Mammary epithelial cell (primary cell): ENCODE measurements at regions of chr9 and their contacts with region 1.

Region 1: DNA sequence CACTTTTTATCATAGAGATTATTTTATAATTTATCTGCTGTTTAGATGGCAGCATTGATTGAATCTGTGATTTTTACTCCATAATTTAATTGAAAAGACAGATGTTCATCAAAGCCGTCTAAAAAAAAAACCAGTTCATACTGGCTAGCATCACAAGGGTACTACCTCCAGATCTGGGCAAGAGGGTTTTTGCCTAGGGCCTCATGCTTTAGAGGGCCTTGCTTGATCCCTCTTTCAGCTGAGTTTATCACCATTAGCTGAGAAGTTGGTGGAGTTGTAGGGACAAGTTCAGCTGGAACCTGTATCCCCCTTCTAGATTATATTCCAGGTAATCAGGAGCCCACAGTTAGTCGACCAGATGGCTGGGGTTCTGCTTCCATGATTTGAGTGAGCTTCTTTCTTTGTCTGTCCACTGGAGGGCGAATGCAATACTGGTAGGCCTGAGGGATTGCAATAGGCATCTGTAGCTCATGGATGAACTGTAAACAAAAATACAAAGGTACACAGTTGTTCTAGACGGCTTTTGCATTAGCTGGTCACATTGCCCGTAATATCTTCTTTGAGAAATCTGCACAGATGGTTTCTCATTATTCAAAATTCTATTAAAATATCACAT is 88.8 kb downstream of the PCSK5 start:
- DNase-seq: no peak
- H3K4me3 ChIP-seq: no peak overlapping the region
- H3K27ac ChIP-seq: no peak overlapping the region
- H3K4me1 ChIP-seq: no peaks in the 10 kb centered on the region
- H3K27me3 ChIP-seq: no peaks in the 10 kb centered on the region
- CTCF ChIP-seq: peak; percentile 32 to 47

Region 2: GRCh38 chr9:75788006-75788634 is 191.1 kb before region 1 on chr9:
- CTCF ChIA-PET with region 1: interaction called, 20 read pairs
- dilution Hi-C with region 1: no loop called
- in situ Hi-C with region 1: no loop called
- intact Hi-C with region 1: no loop called
- DNase-seq: no peak
- H3K4me3 ChIP-seq: no peak overlapping the region
- H3K27ac ChIP-seq: no peak overlapping the region
- H3K4me1 ChIP-seq: no peaks in the 10 kb centered on the region
- H3K27me3 ChIP-seq: no peaks in the 10 kb centered on the region
- CTCF ChIP-seq: no peak

Region 3: DNA sequence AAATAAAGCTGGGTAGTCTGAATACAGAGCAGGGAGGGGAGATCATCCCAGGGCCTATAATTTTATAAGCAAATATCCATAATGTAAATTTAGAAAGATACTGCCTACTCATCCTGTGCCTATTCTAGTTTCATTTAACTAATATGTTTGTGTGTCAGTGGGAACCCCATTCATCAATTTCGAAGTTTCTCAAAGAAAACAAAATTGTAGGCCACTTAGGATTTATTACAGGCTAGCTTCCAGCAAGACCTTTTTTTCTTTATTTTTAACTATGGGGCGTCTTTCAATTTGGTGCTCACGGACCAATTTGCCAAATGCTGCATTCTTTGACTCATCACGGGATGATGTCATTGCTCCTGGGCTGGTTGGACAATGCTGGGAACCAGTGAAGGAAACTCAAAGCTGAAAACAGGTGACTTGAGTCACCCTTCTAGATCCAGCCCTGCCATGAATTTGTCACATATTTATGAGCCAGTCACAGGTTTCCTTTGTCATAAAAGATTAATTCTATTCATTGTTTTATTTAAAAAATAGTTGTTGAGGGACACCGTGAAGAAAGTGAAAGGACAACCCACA is 75.4 kb before region 1 on chr9:
- CTCF ChIA-PET with region 1: interaction called, 21 read pairs
- dilution Hi-C with region 1: no loop called
- in situ Hi-C with region 1: no loop called
- intact Hi-C with region 1: no loop called
- DNase-seq: peak; percentile 72
- H3K4me3 ChIP-seq: no peak overlapping the region
- H3K27ac ChIP-seq: no peak overlapping the region
- H3K4me1 ChIP-seq: peaks cover 13% of the 10 kb centered on the region
- H3K27me3 ChIP-seq: no peaks in the 10 kb centered on the region
- CTCF ChIP-seq: no peak

Region 4: GRCh38 chr9:75930730-75931321 is 48.4 kb before region 1 on chr9:
- CTCF ChIA-PET with region 1: no interaction called
- dilution Hi-C with region 1: no loop called
- in situ Hi-C with region 1: no loop called
- intact Hi-C with region 1: no loop called
- DNase-seq: no peak
- H3K4me3 ChIP-seq: no peak overlapping the region
- H3K27ac ChIP-seq: no peak overlapping the region
- H3K4me1 ChIP-seq: no peaks in the 10 kb centered on the region
- H3K27me3 ChIP-seq: no peaks in the 10 kb centered on the region
- CTCF ChIP-seq: no peak

Region 5: GRCh38 chr9:76027416-76027815 is 48.2 kb after region 1 on chr9:
- CTCF ChIA-PET with region 1: no interaction called
- dilution Hi-C with region 1: no loop called
- in situ Hi-C with region 1: no loop called
- intact Hi-C with region 1: no loop called
- DNase-seq: peak; percentile 42
- H3K4me3 ChIP-seq: no peak overlapping the region
- H3K27ac ChIP-seq: no peak overlapping the region
- H3K4me1 ChIP-seq: peaks cover 17% of the 10 kb centered on the region
- H3K27me3 ChIP-seq: no peaks in the 10 kb centered on the region
- CTCF ChIP-seq: no peak

Region 6: DNA sequence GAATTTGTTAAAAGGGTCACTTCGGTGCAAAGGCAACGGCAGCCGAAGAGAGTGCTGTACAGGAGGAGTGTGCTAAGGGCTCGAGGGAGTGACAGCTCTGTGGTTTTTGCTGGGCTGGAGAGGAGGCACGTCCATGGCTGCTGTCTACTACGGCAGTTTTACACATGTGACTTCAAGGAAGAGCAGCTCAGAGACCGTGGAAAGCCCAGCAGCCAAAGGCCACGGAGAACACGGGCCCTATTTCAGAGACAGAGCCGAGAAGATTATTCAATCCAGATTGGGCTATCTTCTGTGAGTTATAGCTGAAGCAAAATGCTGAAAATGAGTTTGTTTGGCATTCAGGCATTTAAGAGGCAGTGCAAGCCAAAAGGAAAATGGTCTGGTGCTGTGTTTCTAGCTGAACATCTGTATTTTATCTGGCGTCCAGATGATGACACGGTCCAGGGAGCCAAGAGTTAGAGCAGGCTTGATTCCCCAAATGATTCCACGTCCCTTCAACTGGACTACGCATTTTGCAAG is 318.5 kb after region 1 on chr9:
- CTCF ChIA-PET with region 1: no interaction called
- dilution Hi-C with region 1: no loop called
- in situ Hi-C with region 1: loop called in 1 of 2 experiments (anchors 25 kb)
- intact Hi-C with region 1: loop called (anchors 1 kb)
- DNase-seq: no peak
- H3K4me3 ChIP-seq: no peak overlapping the region
- H3K27ac ChIP-seq: no peak overlapping the region
- H3K4me1 ChIP-seq: peaks cover 3% of the 10 kb centered on the region
- H3K27me3 ChIP-seq: no peaks in the 10 kb centered on the region
- CTCF ChIP-seq: no peak